BJ (cell line): ENCODE measurements at regions of chr18 and their contacts with region 1.

Region 1: DNA sequence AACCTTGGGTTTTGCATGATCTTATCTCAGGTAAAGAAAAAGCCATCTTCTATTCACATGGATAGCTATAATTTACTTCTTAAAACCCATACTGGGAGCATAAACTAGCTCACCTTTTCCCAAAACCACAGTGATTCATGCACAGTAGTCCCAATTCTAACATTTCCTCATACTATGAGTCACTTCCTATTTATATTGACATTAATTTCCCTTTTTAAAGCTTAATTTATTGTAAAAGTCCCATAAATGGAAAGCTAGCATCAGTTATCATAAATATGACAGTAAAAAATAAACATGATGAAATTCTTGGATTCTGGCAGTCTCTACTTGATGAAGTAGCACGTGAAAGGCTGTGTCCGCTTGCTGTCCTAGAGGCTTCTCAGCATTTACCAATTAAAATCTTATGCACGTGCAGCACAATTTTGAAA is 180.1 kb downstream of the CDH2 start:
- DNase-seq: no peak
- H3K4me3 ChIP-seq: no peak overlapping the region
- H3K27me3 ChIP-seq: no peaks in the 10 kb centered on the region
- CTCF ChIP-seq: no peak

Region 2: GRCh38 chr18:27582760-27583412 is 413.9 kb before region 1 on chr18:
- CTCF ChIA-PET with region 1: no interaction called
- POLR2A ChIA-PET with region 1: no interaction called
- DNase-seq: no peak
- H3K4me3 ChIP-seq: no peak overlapping the region
- H3K27me3 ChIP-seq: no peaks in the 10 kb centered on the region
- CTCF ChIP-seq: no peak

Region 3: DNA sequence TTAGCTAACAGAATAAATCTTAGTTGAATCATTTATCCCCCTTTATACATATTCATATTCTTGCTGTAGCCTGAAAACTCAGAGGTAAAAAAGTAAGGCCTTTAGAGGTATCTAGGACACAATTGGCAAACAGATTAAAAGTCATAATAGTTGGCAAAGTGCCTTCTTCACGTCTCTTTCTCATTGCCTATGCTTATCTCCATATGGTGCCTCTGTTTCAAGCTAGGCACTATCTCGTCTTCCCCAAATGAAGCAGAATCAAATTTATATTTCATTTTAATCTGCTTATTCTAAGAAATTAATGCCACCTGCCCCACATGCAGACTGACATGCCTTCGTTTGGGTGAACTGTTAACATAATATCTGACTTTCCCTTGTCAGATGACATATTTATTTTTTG is 65.3 kb before region 1 on chr18:
- CTCF ChIA-PET with region 1: no interaction called
- POLR2A ChIA-PET with region 1: no interaction called
- DNase-seq: no peak
- H3K4me3 ChIP-seq: no peak overlapping the region
- H3K27me3 ChIP-seq: no peaks in the 10 kb centered on the region
- CTCF ChIP-seq: no peak

Region 4: DNA sequence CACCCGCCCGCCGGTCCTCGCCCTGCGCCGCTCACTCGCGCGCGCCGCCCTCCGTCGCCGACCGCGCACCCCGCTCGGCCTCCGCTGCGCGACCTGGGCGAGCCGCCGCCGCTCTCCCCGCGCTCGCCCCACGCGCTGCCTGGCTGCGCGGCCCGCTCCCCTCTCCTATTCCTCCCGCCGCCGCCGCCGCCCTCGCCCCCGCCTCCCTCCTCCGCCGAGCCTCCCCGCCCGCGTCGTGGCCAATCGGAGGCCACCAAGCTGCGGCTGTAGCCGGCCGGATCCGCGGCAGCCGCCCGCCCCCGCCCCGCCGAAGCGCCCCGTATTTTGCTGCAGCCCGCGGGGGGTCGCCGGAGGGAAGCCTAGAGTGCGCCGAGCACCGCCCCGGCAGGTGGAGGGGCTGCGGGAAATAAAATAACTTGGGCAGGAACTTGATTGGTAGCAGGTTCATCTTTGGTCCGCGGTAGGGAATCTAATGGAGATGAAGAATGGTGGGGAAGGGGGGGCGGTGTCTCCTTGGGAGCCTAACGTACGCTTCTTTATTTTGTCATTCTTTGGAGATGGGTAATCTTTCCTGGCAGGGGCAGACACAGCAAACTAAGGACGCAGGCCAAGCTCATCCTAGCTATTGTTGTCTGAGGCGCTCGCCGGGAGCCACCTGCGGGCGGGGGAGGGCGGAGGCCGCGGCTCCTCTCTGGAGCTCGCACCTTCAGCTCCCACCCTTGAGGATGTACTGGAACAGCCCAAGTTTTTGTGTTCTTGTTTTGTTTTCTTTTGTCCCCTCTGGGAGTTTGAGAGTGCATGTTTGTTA is 181.2 kb after region 1 on chr18:
- CTCF ChIA-PET with region 1: no interaction called
- POLR2A ChIA-PET with region 1: interaction called, 17 read pairs
- DNase-seq: no peak
- H3K4me3 ChIP-seq: peak overlapping the region; percentile 95
- H3K27me3 ChIP-seq: no peaks in the 10 kb centered on the region
- CTCF ChIP-seq: peak; percentile 13; the same call in 1 of the 2 replicates